HEK293T (cell line): ENCODE measurements at regions of chr5 and their contacts with region 1.

Region 1: DNA sequence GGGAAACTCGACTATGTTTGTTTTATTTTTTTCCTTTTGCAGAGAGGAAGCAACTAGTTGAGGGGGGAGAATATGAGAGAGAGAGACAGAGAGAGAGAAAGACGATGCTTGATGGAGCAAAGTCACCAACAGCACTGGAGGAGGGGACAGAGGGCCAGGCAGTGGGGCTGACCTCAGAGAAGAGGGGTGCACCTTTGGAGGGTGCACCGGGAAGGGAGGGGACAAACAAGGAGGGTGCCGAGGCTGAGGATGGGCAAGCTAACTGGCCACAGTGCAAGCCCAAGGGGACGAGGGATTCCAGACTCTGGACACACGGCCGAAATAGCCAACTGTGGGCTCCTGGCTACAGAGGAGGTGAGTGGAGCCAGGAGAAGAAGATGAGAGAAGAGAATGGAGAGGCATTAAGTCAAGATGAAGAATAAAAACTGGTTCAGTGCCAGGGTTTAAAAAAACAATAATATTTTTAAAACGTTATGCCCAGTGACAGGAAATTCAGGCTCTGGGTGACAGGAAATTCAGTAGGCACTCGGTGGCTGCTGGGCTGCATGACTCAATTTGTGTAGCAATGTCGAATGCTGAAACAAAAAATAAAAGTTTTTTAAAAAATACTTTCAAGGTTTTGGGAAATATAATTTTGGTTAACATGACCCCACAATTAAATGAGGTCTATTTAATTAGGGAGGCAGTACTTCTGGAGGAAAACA is 13.3 kb upstream of the GLRX start:
- DNase-seq: no peak

Region 2: DNA sequence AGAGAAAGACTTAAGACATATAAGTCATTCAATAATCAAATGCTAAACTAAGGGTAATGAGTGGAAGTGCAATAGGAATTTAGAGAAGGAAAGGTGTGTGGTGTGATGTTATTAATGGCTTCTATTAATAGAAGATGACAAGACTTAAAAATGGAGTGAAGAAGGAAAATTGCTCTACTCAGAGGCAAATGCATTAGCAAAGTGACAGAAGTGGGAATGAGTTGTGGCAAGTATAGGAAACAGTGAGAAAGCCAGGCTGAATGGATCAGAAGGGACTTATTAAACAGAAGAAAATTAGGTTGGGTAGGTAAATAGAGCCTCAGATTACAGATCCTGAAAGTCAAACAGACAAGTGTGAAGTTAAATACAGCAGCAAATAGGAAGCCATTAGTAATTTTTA is 286.8 kb before region 1 on chr5:
- CTCF ChIA-PET with region 1: no interaction called
- POLR2A ChIA-PET with region 1: no interaction called
- DNase-seq: no peak

Region 3: DNA sequence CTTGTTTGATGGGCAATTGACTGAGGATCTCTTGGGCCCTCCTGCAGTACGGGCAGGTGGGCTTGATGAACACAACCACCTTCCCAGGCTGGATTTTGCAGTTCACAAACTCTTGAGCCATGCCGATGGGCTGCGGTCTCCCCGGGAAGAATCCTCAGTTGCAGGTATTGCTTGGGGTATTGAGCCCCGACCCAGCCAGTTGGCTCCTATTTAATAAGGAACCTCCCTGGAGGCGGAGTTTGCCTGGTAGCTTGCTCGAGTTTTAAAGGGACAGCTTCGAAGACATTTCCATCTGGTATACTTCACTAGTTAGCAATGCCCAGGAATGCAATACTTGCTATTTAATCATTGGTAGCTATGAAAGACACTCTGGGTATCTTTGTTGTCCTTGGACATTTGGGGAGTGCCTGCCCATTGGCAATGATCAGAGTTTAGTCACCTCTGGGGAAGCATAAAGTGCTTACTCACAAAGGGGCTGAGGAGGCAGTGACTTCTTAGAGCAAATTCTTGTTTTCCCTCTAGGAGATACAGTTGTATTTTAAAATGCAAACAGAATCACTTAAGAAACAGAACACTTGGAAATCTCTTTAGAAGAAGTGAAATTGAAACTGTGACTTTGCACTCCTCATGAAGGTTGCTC is 13.2 kb before region 1 on chr5 and contains the start of gene GLRX:
- CTCF ChIA-PET with region 1: interaction called, 9 read pairs
- POLR2A ChIA-PET with region 1: interaction called, 51 read pairs
- DNase-seq: peak; percentile 65